ENCODE measurements at regions of chr19 and their contacts with region 1.

Region 1: GRCh38 chr19:46076951-46077816 is 36.4 kb upstream of the IGFL4 start:
- DNase-seq: peak in 2 of 4 donors; percentile 27 to 63
- ATAC-seq: peak; percentile 90
- H3K4me3 ChIP-seq: no peak overlapping the region
- H3K27ac ChIP-seq: no peak overlapping the region
- H3K4me1 ChIP-seq: peaks cover 0 to 8% of the 10 kb centered on the region in 2 donors
- H3K27me3 ChIP-seq: peaks cover 43 to 88% of the 10 kb centered on the region in 2 donors
- CTCF ChIP-seq: peak; percentile 47 to 74

Region 2: DNA sequence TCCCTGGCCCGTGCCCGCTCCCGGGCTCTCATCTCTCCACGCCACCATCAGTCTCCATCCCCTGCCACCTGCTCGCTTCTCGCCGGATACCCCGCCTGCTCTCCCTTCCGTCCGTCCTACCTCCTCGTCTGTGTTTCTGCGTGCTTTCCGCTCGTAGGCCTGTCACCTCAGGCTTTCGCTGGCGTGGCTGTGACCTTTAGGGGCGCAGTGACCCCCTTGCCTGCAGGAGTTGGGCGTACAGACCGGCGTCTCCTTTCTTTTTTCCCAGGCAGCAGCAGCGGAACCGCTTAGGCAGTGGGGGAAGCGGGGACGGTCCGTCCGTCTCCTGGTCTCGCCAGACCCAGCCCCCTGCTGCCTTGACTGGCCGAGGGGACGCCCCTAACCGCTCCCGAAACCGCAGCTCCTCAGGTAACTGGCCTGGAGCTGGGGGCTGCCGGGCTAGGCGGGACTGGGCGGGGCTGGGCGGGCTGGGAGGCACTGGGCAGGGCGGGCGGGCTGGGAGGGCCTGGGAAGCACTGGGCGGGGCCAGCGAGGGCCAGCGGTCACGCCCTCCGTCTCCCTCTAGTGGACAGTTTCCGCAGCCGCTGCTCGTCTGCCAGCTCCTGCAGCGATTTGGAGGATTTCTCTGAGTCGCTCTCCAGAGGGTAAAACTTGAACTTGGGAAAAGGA is 60.6 kb before region 1 on chr19:
- intact Hi-C with region 1: no loop called
- DNase-seq: peak; percentile 75 to 95 (median 87)
- ATAC-seq: peak; percentile 86
- H3K4me3 ChIP-seq: peak overlapping the region; percentile 46 to 78
- H3K27ac ChIP-seq: peak overlapping the region in 1 of 2 donors; percentile 73
- H3K4me1 ChIP-seq: peaks cover 7 to 35% of the 10 kb centered on the region in 2 donors
- H3K27me3 ChIP-seq: peaks cover 17 to 37% of the 10 kb centered on the region in 2 donors
- CTCF ChIP-seq: peak; percentile 73 to 92

Region 3: GRCh38 chr19:46181388-46181779 is 104.2 kb after region 1 on chr19:
- intact Hi-C with region 1: loop called in 1 of 2 experiments (anchors 10 kb)
- DNase-seq: no peak
- ATAC-seq: no peak
- H3K4me3 ChIP-seq: no peak overlapping the region
- H3K27ac ChIP-seq: no peak overlapping the region
- H3K4me1 ChIP-seq: no peaks in the 10 kb centered on the region
- H3K27me3 ChIP-seq: peaks cover 0 to 19% of the 10 kb centered on the region in 2 donors
- CTCF ChIP-seq: no peak

Region 4: GRCh38 chr19:46232029-46232428 is 154.8 kb after region 1 on chr19:
- intact Hi-C with region 1: no loop called
- DNase-seq: peak in 3 of 4 donors; percentile 48 to 82 (median 59)
- ATAC-seq: peak; percentile 89
- H3K4me3 ChIP-seq: no peak overlapping the region
- H3K27ac ChIP-seq: no peak overlapping the region
- H3K4me1 ChIP-seq: no peaks in the 10 kb centered on the region
- H3K27me3 ChIP-seq: peaks cover 0 to 35% of the 10 kb centered on the region in 2 donors
- CTCF ChIP-seq: no peak